T-cell (primary cell): ENCODE measurements at regions of chr5 and their contacts with region 1.

Region 1: GRCh38 chr5:100903039-100903887 is at the start of gene ST8SIA4:
- DNase-seq: peak; percentile 74 to 97 (median 92)
- ATAC-seq: peak; percentile 77 to 81 (median 78)
- H3K4me3 ChIP-seq: peak within 1 kb of the TSS; percentile 87 to 99
- H3K4me3 Mint-ChIP-seq: peak within 1 kb of the TSS; percentile 86 to 99 (median 88)
- H3K27ac ChIP-seq: peak within 1 kb of the TSS; percentile 90
- H3K27ac Mint-ChIP-seq: peak within 1 kb of the TSS; percentile 94 to 99
- H3K4me1 ChIP-seq: peaks cover 22 to 32% of the 10 kb centered on the region in 2 experiments
- H3K4me1 Mint-ChIP-seq: peaks cover 47 to 60% (median 56%) of the 10 kb centered on the region in 3 donors
- H3K27me3 ChIP-seq: no peaks in the 10 kb centered on the region
- H3K27me3 Mint-ChIP-seq: no peaks in the 10 kb centered on the region
- total RNA-seq, gene ST8SIA4: 27.0 to 36.9 (median 28.8) TPM

Region 2: GRCh38 chr5:98975682-98976407 is 1927.4 kb before region 1 on chr5:
- CTCF ChIA-PET with region 1: no interaction called
- POLR2A ChIA-PET with region 1: interaction called in 1 of 2 experiments, 15 read pairs
- DNase-seq: no peak
- ATAC-seq: peak in 3 of 4 experiments; percentile 37 to 65 (median 45)
- H3K4me3 ChIP-seq: no peak overlapping the region
- H3K4me3 Mint-ChIP-seq: no peak overlapping the region
- H3K27ac ChIP-seq: no peak overlapping the region
- H3K27ac Mint-ChIP-seq: peak overlapping the region in 1 of 2 donors; percentile 79
- H3K4me1 ChIP-seq: peaks cover 0 to 4% of the 10 kb centered on the region in 2 experiments
- H3K4me1 Mint-ChIP-seq: peaks cover 18 to 24% (median 21%) of the 10 kb centered on the region in 3 donors
- H3K27me3 ChIP-seq: no peaks in the 10 kb centered on the region
- H3K27me3 Mint-ChIP-seq: no peaks in the 10 kb centered on the region

Region 3: DNA sequence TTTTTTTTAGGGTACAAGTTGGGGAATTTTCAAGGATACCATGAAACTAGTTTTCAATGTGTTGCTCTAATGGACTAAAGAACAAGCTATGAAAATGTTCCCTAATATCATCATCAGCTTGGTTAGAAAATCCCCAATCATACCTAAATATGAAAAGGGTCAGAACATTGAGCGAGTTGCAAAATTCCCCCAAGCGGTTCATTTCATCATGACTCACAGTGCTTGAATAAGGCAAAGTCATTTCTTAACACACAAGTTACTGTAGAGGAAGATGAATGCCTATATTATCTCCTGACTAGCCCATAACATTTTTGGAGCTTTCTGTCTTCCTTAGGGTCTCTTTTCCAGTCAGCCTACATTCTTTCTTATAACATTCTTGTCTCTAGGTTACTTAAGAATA is 62.9 kb before region 1 on chr5:
- CTCF ChIA-PET with region 1: interaction called, 5 to 50 read pairs
- POLR2A ChIA-PET with region 1: interaction called in 1 of 2 experiments, 22 read pairs
- DNase-seq: peak in 6 of 35 experiments; percentile 1 to 60 (median 6)
- ATAC-seq: peak in 3 of 4 experiments; percentile 42 to 70 (median 51)
- H3K4me3 ChIP-seq: no peak overlapping the region
- H3K4me3 Mint-ChIP-seq: peak overlapping the region in 1 of 3 donors; percentile 63
- H3K27ac ChIP-seq: no peak overlapping the region
- H3K27ac Mint-ChIP-seq: peak overlapping the region; percentile 86 to 88
- H3K4me1 ChIP-seq: peaks cover 3 to 21% of the 10 kb centered on the region in 2 experiments
- H3K4me1 Mint-ChIP-seq: peaks cover 65 to 69% (median 65%) of the 10 kb centered on the region in 3 donors
- H3K27me3 ChIP-seq: no peaks in the 10 kb centered on the region
- H3K27me3 Mint-ChIP-seq: no peaks in the 10 kb centered on the region

Region 4: DNA sequence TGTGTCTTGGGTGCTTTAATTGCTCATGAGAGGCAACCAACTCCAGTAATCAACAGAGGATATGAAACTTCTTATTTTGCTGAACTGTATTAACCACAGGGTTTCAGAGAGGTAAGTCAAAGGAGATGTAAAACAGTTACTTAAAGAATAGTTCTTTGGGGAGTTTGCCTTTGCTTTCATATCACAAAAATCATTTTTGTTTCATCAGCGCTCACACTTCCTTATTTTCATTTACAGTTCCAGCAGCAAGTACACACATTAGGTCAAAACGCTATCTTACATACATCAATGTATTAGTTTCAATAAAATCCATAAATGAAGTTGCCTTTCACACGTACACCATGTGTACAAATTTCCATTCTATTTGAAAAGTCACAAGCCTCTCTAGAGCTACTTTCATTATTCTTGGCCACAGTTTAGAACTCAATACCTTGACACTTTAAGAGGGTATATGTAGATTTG is 50.2 kb before region 1 on chr5:
- CTCF ChIA-PET with region 1: interaction called, 4 to 16 read pairs
- POLR2A ChIA-PET with region 1: interaction called, 4 to 5 read pairs
- DNase-seq: peak in 1 of 35 experiments; percentile 16
- ATAC-seq: peak; percentile 34 to 69 (median 64)
- H3K4me3 ChIP-seq: no peak overlapping the region
- H3K4me3 Mint-ChIP-seq: peak overlapping the region; percentile 22 to 62 (median 29)
- H3K27ac ChIP-seq: peak overlapping the region; percentile 25
- H3K27ac Mint-ChIP-seq: peak overlapping the region; percentile 78 to 85
- H3K4me1 ChIP-seq: peaks cover 7 to 17% of the 10 kb centered on the region in 2 experiments
- H3K4me1 Mint-ChIP-seq: peaks cover 41 to 46% (median 44%) of the 10 kb centered on the region in 3 donors
- H3K27me3 ChIP-seq: no peaks in the 10 kb centered on the region
- H3K27me3 Mint-ChIP-seq: no peaks in the 10 kb centered on the region

Region 5: GRCh38 chr5:100890461-100891008 is 12.7 kb before region 1 on chr5:
- CTCF ChIA-PET with region 1: interaction called, 3 to 49 read pairs
- POLR2A ChIA-PET with region 1: interaction called, 5 to 56 read pairs
- DNase-seq: peak in 1 of 35 experiments; percentile 20
- ATAC-seq: no peak
- H3K4me3 ChIP-seq: no peak overlapping the region
- H3K4me3 Mint-ChIP-seq: peak overlapping the region; percentile 64 to 70 (median 70)
- H3K27ac ChIP-seq: peak overlapping the region; percentile 62
- H3K27ac Mint-ChIP-seq: peak overlapping the region; percentile 88 to 90
- H3K4me1 ChIP-seq: peaks cover 2 to 53% of the 10 kb centered on the region in 2 experiments
- H3K4me1 Mint-ChIP-seq: peaks cover 68 to 79% (median 69%) of the 10 kb centered on the region in 3 donors
- H3K27me3 ChIP-seq: no peaks in the 10 kb centered on the region
- H3K27me3 Mint-ChIP-seq: no peaks in the 10 kb centered on the region